ENCODE measurements at regions of chr5 and their contacts with region 1.

Region 1: DNA sequence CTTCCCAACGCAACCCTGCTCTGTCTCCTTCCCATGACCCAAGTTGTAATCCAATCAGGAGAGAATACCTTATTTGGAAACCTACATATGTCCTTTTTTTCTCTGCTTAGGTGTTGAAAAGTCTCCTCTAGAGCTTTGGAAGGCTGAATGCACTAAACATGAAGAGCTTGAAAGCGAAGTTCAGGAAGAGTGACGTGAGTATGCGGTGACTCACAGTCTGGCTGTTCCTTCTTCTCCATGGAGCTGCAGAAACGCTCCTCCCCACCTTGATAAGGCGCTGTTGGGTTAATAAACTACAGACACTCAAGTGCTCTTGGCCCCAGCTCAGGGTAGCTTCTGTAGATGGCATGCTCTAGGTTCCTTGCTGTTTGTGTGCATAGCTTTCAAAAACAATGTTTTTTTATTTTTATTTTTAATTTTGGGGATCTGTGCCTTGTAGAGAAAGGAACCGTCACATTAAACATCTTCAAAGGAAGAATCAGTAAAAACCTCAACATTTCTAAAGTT is 30.7 kb downstream of the RAI14 start:
- DNase-seq: peak; percentile 74
- H3K4me3 ChIP-seq: no peak overlapping the region
- H3K27ac ChIP-seq: peak overlapping the region; percentile 81
- H3K27me3 ChIP-seq: no peaks in the 10 kb centered on the region
- CTCF ChIP-seq: 0 out of 2 replicates have a peak, but pooled peaks have one; percentile 1

Region 2: GRCh38 chr5:34667705-34668104 is 19.1 kb before region 1 on chr5:
- CTCF ChIA-PET with region 1: interaction called, 3 read pairs
- POLR2A ChIA-PET with region 1: interaction called, 11 read pairs
- DNase-seq: no peak
- H3K4me3 ChIP-seq: no peak overlapping the region
- H3K27ac ChIP-seq: no peak overlapping the region
- H3K27me3 ChIP-seq: no peaks in the 10 kb centered on the region
- CTCF ChIP-seq: no peak

Measured in AG04450 (cell line).